ENCODE measurements at regions of chr11 and their contacts with region 1.

Region 1: GRCh38 chr11:47552566-47553416 is at the start of gene CELF1:
- DNase-seq: peak; percentile 88 to 95
- H3K4me3 ChIP-seq: peak within 1 kb of the TSS; percentile 97 to 98
- H3K27ac ChIP-seq: peak within 1 kb of the TSS; percentile 94 to 96
- H3K4me1 ChIP-seq: peaks cover 0 to 45% (median 28%) of the 10 kb centered on the region in 4 donors
- H3K27me3 ChIP-seq: no peaks in the 10 kb centered on the region
- CTCF ChIP-seq: peak; percentile 91 to 93

Region 2: GRCh38 chr11:47499614-47500013 is 53.2 kb before region 1 on chr11:
- intact Hi-C with region 1: loop called (anchors 10 kb)
- DNase-seq: no peak
- H3K4me3 ChIP-seq: no peak overlapping the region
- H3K27ac ChIP-seq: peak overlapping the region; percentile 4 to 7
- H3K4me1 ChIP-seq: peaks cover 0 to 82% (median 57%) of the 10 kb centered on the region in 4 donors
- H3K27me3 ChIP-seq: no peaks in the 10 kb centered on the region
- CTCF ChIP-seq: no peak